Posterior vena cava (tissue), 2 donors: ENCODE measurements at regions of chr13 and their contacts with region 1.

Region 1: DNA sequence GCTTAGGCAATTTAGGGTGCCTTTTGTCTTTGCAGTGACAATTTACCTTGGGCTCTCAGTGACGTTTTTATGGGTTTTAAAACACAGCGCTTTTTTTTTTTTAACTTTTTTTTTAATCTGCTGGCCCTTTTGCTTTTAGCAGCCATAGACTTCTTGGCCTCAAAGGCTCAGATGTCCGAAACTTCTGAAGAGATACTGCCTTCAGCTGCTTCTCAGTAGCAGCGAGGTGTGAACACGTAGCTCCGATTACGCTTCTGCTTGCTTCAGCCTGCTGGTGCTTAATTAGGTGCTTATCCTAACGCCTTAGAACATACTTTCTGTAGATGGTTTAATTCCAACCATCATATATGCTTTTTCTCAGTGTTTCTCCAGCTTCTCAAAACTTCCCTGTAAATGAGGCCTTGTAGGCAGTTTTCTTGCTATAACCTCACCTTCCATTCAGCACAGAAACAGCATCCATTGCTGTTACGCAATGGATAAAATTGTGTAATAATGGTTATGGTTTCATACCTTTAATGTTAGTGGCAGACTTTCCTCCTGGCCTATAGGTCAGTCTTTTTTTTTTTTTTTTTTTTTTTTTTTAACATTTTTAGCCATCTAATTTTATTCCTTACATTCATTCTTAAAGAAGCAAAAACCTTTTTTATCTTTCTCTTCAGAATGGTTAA is 723.9 kb downstream of the GPC5 start:
- DNase-seq: no peak

Region 2: DNA sequence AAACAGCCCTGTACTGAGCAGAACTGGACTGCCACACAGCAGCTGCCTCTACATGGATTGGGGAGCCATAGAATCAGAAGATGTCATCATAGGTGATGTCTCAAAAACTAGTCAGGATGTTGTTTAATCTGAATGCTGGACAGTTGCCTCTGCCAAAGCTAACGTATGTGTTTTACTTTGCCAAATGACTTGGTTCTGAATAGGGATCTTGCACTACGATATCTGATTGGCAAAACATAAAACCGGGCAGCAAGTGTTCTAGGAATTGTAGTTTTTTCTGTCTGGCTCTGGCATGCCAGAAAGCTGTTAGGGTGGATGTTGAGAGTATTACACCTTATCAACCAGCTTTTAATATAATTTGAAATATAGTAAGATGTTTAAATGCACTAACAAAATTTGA is 78.0 kb before region 1 on chr13:
- intact Hi-C with region 1: loop called in 1 of 2 experiments (anchors 2 kb)
- DNase-seq: no peak